ENCODE measurements at regions of chr1 and their contacts with region 1.

Region 1: DNA sequence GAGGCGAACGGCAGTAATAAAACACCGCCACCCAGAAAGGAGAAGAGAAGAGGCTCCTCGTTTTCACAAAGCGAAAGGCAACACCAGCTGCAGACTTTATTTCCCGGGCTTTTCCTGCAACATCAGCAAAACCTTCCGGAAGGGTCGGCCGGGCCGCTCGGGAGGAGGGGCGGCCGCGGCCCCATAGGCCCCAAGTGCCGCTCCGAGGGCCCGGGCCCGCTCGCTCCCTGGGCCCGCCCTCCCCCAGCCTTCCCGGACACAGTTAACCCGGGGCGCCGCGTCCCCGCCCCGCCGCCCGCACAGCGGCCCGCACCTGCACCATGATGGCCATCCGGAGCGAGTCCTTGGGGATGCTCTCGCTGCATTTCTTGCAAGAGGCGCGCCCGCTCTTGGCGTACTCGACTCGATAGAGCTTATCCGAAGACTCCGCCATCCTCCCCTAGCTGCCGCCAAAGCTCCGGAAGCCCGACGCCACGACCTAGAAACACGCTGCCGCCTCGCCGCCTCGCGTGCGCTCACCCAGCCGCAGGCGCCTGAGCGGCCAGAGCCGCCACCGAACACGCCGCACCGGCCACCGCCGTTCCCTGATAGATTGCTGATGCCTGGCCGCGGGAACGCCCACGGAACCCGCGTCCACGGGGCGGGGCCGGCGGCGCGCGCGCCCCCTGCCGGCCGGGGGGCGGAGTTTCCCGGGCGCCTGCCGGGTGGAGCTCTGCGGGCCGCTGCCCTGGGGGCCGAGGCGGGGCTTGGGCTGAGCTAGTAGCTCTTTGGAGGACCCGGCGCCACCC is at the start of gene PARP1:
- DNase-seq: peak; percentile 91 to 94 (median 91)
- H3K4me3 ChIP-seq: peak within 1 kb of the TSS; percentile 68 to 83
- H3K4me3 Mint-ChIP-seq: peak within 1 kb of the TSS; percentile 94 to 99 (median 98)
- H3K27ac ChIP-seq: peak within 1 kb of the TSS; percentile 76
- H3K27ac Mint-ChIP-seq: peak within 1 kb of the TSS; percentile 94 to 98 (median 96)
- H3K4me1 ChIP-seq: peaks cover 46% of the 10 kb centered on the region
- H3K4me1 Mint-ChIP-seq: peaks cover 32 to 60% (median 43%) of the 10 kb centered on the region in 4 donors
- H3K27me3 ChIP-seq: no peaks in the 10 kb centered on the region
- H3K27me3 Mint-ChIP-seq: no peaks in the 10 kb centered on the region
- total RNA-seq, gene PARP1: 120 to 129 TPM

Region 2: DNA sequence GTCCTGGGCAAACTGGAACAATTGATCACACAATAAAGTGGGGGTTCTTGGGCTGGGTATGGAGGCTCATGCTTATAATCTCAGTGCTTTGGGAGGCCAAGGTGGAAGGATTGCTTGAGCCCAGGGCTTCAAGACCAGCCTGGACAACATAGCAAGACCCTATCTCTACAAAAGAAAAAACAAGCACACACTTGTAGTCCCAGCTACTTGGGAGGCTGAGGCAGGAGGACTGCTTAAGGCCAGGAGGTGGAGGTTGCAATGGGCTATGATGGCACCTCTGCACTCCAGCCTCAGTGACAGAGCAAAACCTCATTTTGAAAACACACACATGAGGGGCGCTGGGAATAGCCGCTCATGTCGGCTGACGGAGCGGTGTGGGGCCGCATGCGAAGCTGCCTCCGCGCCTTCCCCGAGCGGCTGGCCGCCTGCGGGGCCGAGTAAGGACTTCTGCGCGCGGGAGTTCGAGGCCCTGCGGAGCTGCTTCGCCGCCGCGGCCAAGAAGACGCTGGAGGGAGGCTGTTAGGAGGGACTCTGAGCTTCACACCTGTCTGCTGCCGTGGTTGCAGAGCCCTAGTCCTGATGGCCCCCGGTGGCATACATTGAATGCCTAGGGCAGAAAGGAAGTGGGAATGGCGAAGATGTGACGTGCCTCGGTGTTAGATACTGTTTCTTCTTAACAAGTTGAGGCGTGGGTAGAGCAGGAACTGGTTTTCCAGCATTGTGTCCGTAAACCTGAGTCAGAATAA is 280.7 kb before region 1 on chr1:
- CTCF ChIA-PET with region 1: interaction called, 30 read pairs
- POLR2A ChIA-PET with region 1: interaction called, 4 read pairs
- intact Hi-C with region 1: loop called (anchors 2 kb)
- DNase-seq: no peak
- H3K4me3 ChIP-seq: no peak overlapping the region
- H3K4me3 Mint-ChIP-seq: peak overlapping the region in 6 of 8 donors; percentile 10 to 64 (median 48)
- H3K27ac ChIP-seq: no peak overlapping the region
- H3K27ac Mint-ChIP-seq: peak overlapping the region in 3 of 7 donors; percentile 32 to 56 (median 37)
- H3K4me1 ChIP-seq: peaks cover 32% of the 10 kb centered on the region
- H3K4me1 Mint-ChIP-seq: peaks cover 20 to 45% (median 27%) of the 10 kb centered on the region in 4 donors
- H3K27me3 ChIP-seq: no peaks in the 10 kb centered on the region
- H3K27me3 Mint-ChIP-seq: no peaks in the 10 kb centered on the region

Region 3: DNA sequence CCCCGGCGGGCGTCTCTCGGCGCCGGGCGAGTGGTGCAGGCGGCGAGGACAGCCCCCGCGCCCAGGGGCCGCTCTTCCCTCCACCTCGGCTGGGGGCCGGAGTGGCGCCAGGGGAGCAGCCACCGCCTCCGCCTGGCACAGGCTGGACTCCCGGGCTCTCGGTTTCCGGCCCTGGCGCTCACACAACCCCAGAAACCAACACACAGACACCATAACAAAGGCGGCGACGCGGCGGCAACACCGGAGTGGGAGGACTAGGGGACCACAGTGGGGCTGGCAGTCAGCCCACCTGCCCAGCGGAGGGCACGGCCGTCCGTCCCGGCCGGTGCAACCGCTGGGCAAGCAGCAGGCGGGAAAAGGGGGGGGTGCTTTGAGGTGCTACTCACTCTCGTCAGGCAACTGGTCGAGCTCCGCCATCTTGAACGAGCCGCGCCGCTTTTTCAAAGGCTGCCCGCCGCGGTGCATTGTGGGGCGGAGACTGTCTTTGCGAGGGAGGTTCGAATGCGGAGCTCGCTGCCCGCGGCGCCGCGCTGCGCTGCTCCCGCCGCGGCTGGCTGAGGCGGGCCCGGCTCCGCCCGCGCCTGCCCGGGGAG is 98.9 kb before region 1 on chr1 and contains the start of gene LIN9:
- CTCF ChIA-PET with region 1: interaction called, 12 read pairs
- POLR2A ChIA-PET with region 1: interaction called, 9 read pairs
- intact Hi-C with region 1: loop called (anchors 5 kb)
- DNase-seq: peak; percentile 85 to 91 (median 87)
- H3K4me3 ChIP-seq: peak within 1 kb of the TSS; percentile 84 to 85
- H3K4me3 Mint-ChIP-seq: peak within 1 kb of the TSS; percentile 91 to 95 (median 92)
- H3K27ac ChIP-seq: peak within 1 kb of the TSS; percentile 70
- H3K27ac Mint-ChIP-seq: peak within 1 kb of the TSS; percentile 78 to 93 (median 89)
- H3K4me1 ChIP-seq: peaks cover 10% of the 10 kb centered on the region
- H3K4me1 Mint-ChIP-seq: peaks cover 12 to 20% (median 15%) of the 10 kb centered on the region in 4 donors
- H3K27me3 ChIP-seq: no peaks in the 10 kb centered on the region
- H3K27me3 Mint-ChIP-seq: peaks cover 5 to 7% of the 10 kb centered on the region in 2 donors
- total RNA-seq, gene LIN9: 5.0 to 5.5 TPM

Region 4: GRCh38 chr1:226424228-226425003 is 16.7 kb after region 1 on chr1:
- CTCF ChIA-PET with region 1: interaction called, 41 read pairs
- POLR2A ChIA-PET with region 1: interaction called, 60 read pairs
- intact Hi-C with region 1: loop called (anchors 1 kb)
- DNase-seq: peak in 4 of 5 donors; percentile 13 to 38 (median 34)
- H3K4me3 ChIP-seq: no peak overlapping the region
- H3K4me3 Mint-ChIP-seq: peak overlapping the region in 2 of 8 donors; percentile 22 to 42
- H3K27ac ChIP-seq: no peak overlapping the region
- H3K27ac Mint-ChIP-seq: no peak overlapping the region
- H3K4me1 ChIP-seq: peaks cover 17% of the 10 kb centered on the region
- H3K4me1 Mint-ChIP-seq: peaks cover 7 to 18% (median 9%) of the 10 kb centered on the region in 4 donors
- H3K27me3 ChIP-seq: no peaks in the 10 kb centered on the region
- H3K27me3 Mint-ChIP-seq: peaks cover 1 to 3% of the 10 kb centered on the region in 2 donors

Region 5: DNA sequence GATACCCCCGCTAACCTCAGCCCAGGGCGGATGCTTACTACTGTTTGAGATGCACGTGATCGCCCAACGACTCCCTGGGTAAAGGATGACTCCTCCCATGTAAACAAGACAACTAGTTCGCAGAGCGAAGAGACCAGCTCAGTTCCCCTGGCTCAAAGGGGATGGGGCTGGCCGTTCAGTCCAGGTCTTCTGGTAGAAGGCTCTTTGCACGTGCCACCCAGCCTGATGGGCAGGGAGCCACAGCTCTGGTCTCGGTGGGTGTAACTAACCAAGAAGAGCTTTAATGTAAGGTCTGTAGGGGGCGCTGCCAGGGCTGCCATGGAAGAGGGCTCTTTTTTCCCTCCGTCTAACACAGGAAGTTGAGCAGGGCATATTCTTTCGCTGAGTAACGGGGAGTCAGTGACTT is 49.6 kb after region 1 on chr1:
- CTCF ChIA-PET with region 1: interaction called, 22 read pairs
- POLR2A ChIA-PET with region 1: interaction called, 18 read pairs
- intact Hi-C with region 1: no loop called
- DNase-seq: peak; percentile 52 to 67 (median 61)
- H3K4me3 ChIP-seq: peak overlapping the region in 1 of 2 donors; percentile 48
- H3K4me3 Mint-ChIP-seq: peak overlapping the region; percentile 74 to 92 (median 86)
- H3K27ac ChIP-seq: no peak overlapping the region
- H3K27ac Mint-ChIP-seq: peak overlapping the region; percentile 46 to 95 (median 89)
- H3K4me1 ChIP-seq: peaks cover 7% of the 10 kb centered on the region
- H3K4me1 Mint-ChIP-seq: peaks cover 7 to 14% (median 11%) of the 10 kb centered on the region in 4 donors
- H3K27me3 ChIP-seq: no peaks in the 10 kb centered on the region
- H3K27me3 Mint-ChIP-seq: peaks cover 0 to 2% of the 10 kb centered on the region in 2 donors

Region 6: GRCh38 chr1:227563324-227564201 is 1155.9 kb after region 1 on chr1 and contains the start of gene ZNF678:
- CTCF ChIA-PET with region 1: no interaction called
- POLR2A ChIA-PET with region 1: no interaction called
- intact Hi-C with region 1: loop called (anchors 5 kb)
- DNase-seq: peak; percentile 84 to 89 (median 86)
- H3K4me3 ChIP-seq: peak within 1 kb of the TSS; percentile 39 to 74
- H3K4me3 Mint-ChIP-seq: peak within 1 kb of the TSS; percentile 90 to 97 (median 93)
- H3K27ac ChIP-seq: peak within 1 kb of the TSS; percentile 68
- H3K27ac Mint-ChIP-seq: peak within 1 kb of the TSS; percentile 89 to 96 (median 95)
- H3K4me1 ChIP-seq: peaks cover 7% of the 10 kb centered on the region
- H3K4me1 Mint-ChIP-seq: peaks cover 24 to 30% (median 27%) of the 10 kb centered on the region in 4 donors
- H3K27me3 ChIP-seq: no peaks in the 10 kb centered on the region
- H3K27me3 Mint-ChIP-seq: peaks cover 20 to 28% of the 10 kb centered on the region in 2 donors
- total RNA-seq, gene ZNF678: 8.4 to 10.2 TPM